ENCODE measurements at regions of chr17 and their contacts with region 1.

Region 1: DNA sequence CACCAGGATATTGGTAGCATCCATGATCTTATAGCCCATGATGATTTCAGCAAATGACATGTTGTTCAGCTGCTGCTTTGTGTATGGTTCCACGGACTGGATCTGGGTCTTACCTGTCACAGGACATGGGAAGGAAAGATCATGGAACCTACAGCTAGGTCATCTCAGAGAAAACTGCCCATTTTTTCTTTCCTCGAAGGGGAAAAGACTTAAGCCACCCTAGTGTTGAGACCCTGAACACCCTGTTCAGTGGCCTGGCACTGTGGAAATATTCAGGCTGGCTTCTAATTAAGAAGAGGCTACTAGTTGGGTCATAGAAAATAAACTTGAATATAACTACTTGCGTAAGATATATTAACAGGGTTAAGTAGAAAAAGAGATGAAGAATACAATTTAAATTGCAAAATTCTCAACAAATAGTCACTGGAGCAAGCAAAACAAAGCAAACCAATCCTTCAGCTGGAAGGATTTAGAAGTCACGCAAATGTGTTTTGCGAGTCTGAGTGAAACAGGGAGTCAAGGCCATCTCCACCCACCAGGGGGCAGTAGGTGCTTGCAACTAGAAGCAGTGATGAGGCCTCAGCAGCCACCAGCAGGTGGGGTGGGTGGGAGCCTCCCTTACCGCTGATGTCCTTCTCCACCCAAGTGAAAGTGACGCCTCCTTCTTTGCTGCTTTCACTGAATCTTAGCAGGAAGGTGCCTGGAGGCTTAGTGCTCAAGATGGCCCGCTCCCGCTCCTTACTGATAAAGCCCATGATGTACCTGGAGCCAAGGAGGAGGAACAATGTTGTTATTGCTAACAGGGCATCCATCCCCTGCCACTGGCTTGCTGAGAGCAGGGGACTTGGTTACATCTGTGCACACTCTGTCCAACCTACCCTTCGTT is 34.3 kb downstream of the STAT5A start:
- H3K4me3 ChIP-seq: no peak overlapping the region
- H3K27ac ChIP-seq: no peak overlapping the region
- H3K4me1 ChIP-seq: no peaks in the 10 kb centered on the region
- CTCF ChIP-seq: peak; percentile 100

Region 2: DNA sequence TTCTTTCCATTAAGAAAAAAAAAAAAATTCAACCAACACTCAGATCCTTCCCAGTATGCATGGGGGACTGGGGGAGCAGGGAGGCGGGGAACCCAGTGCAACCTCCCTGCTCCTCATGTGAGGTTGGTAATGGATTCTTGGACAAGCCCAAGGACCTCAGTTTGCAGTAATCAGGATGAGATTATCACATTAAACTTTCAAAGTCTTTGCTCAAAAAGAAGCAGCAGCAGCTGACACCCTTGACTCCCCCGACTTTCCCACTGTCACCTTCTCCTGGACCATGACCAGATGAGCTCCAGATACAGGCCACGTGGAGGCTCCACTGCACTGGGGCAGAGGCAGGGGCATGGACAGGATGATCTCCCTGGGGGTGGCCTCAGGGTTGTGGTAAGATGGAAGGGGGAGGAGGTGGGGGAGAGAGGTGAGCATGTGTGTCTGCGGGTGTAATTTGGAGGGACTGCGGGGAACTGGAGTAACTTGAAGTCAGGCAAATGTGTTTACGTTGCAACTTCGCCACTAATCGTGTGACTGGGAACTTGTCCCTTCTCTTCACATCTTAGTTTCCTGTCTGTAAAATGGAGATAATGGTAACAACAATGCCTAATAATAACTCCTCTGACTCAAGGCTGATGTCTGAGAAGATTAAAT is 244.1 kb before region 1 on chr17:
- CTCF ChIA-PET with region 1: no interaction called
- POLR2A ChIA-PET with region 1: no interaction called
- H3K4me3 ChIP-seq: no peak overlapping the region
- H3K27ac ChIP-seq: no peak overlapping the region
- H3K4me1 ChIP-seq: no peaks in the 10 kb centered on the region
- CTCF ChIP-seq: no peak

Region 3: GRCh38 chr17:42312285-42313130 is 10.1 kb before region 1 on chr17:
- CTCF ChIA-PET with region 1: interaction called, 22 read pairs
- POLR2A ChIA-PET with region 1: interaction called, 8 read pairs
- H3K4me3 ChIP-seq: no peak overlapping the region
- H3K27ac ChIP-seq: no peak overlapping the region
- H3K4me1 ChIP-seq: peaks cover 2% of the 10 kb centered on the region
- CTCF ChIP-seq: peak; percentile 58

Region 4: DNA sequence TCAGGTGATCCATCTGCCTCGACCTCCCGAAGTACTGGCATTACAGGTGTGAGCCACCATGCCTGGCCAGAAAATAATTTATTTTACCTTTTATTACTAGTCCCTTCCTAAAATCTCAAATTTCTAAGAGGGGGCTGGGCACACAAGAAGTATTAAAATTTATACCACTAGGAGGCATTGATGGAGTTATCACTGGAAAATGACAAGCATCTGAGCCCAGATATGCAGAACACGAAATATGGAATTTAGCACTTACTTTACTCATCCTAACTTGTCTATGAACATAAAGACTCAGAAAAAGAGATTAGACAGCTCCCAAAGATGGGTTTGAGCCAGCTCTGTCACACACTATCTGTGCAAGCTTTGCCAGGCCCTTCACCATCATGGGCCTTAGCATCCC is 12.1 kb after region 1 on chr17:
- CTCF ChIA-PET with region 1: interaction called, 12 read pairs
- POLR2A ChIA-PET with region 1: no interaction called
- H3K4me3 ChIP-seq: no peak overlapping the region
- H3K27ac ChIP-seq: no peak overlapping the region
- H3K4me1 ChIP-seq: no peaks in the 10 kb centered on the region
- CTCF ChIP-seq: no peak

Region 5: DNA sequence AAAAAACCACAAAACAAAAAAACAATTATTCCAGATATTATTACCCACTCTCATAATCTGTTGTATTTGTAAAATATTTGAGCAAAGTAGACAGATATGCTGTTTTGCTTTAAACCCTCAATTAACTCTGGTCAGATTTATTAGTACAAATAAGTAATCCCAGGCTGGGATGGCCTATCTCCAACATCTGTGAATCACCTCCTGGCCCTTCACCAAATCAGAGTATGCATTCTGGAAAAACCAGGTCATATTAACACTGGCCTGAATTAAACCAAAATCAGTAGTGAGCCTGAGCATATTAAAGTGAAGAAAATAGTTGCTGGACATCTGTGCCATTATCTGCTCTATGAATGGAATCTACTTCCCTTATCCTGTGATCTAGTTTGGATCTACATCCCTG is 24.6 kb after region 1 on chr17:
- CTCF ChIA-PET with region 1: no interaction called
- POLR2A ChIA-PET with region 1: no interaction called
- H3K4me3 ChIP-seq: no peak overlapping the region
- H3K27ac ChIP-seq: no peak overlapping the region
- H3K4me1 ChIP-seq: peaks cover 6% of the 10 kb centered on the region
- CTCF ChIP-seq: no peak

Region 6: GRCh38 chr17:42388381-42389134 is 65.9 kb after region 1 on chr17 and contains the start of gene STAT3:
- CTCF ChIA-PET with region 1: interaction called, 12 read pairs
- POLR2A ChIA-PET with region 1: interaction called, 5 read pairs
- H3K4me3 ChIP-seq: peak within 1 kb of the TSS; percentile 95
- H3K27ac ChIP-seq: peak within 1 kb of the TSS; percentile 73
- H3K4me1 ChIP-seq: peaks cover 8% of the 10 kb centered on the region
- CTCF ChIP-seq: 0 out of 2 replicates have a peak, but pooled peaks have one; percentile 57

Region 7: GRCh38 chr17:42405963-42406495 is 83.4 kb after region 1 on chr17:
- CTCF ChIA-PET with region 1: interaction called, 378 read pairs
- POLR2A ChIA-PET with region 1: interaction called, 11 read pairs
- H3K4me3 ChIP-seq: no peak overlapping the region
- H3K27ac ChIP-seq: no peak overlapping the region
- H3K4me1 ChIP-seq: 0 out of 2 replicates have a peak, but pooled peaks cover 3% of the 10 kb centered on the region
- CTCF ChIP-seq: peak; percentile 88

Region 8: GRCh38 chr17:42453439-42453838 is 130.8 kb after region 1 on chr17:
- CTCF ChIA-PET with region 1: no interaction called
- POLR2A ChIA-PET with region 1: no interaction called
- H3K4me3 ChIP-seq: no peak overlapping the region
- H3K27ac ChIP-seq: no peak overlapping the region
- H3K4me1 ChIP-seq: no peaks in the 10 kb centered on the region
- CTCF ChIP-seq: no peak

Region 9: GRCh38 chr17:42517516-42517915 is 194.9 kb after region 1 on chr17:
- CTCF ChIA-PET with region 1: interaction called, 66 read pairs
- POLR2A ChIA-PET with region 1: no interaction called
- H3K4me3 ChIP-seq: no peak overlapping the region
- H3K27ac ChIP-seq: no peak overlapping the region
- H3K4me1 ChIP-seq: peaks cover 25% of the 10 kb centered on the region
- CTCF ChIP-seq: peak; percentile 94

Region 10: DNA sequence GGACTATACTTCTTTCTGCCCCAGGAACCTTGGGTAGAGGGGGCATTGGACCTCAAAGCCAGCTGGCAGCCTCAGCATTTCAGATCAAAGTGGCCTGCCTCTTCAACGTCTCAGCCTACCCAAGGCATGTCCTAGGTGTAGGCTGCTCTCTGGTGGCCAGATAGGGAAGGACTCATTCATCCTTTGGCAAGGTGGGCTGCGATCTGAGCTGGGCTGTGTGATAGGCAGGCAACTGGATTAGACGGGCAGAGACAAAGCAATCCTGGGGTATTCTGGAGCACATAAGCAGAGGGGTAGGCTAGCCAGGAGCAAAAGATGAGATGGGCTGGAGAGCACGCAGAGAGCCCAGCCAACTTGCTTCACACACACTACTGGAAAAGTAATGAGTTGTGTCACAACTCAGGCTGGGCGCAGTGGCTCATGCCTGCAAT is 204.7 kb after region 1 on chr17:
- CTCF ChIA-PET with region 1: interaction called, 37 read pairs
- POLR2A ChIA-PET with region 1: no interaction called
- H3K4me3 ChIP-seq: no peak overlapping the region
- H3K27ac ChIP-seq: no peak overlapping the region
- H3K4me1 ChIP-seq: peaks cover 15% of the 10 kb centered on the region
- CTCF ChIP-seq: peak; percentile 87